GM10248 (cell line): ENCODE measurements at regions of chr4 and their contacts with region 1.

Region 1: DNA sequence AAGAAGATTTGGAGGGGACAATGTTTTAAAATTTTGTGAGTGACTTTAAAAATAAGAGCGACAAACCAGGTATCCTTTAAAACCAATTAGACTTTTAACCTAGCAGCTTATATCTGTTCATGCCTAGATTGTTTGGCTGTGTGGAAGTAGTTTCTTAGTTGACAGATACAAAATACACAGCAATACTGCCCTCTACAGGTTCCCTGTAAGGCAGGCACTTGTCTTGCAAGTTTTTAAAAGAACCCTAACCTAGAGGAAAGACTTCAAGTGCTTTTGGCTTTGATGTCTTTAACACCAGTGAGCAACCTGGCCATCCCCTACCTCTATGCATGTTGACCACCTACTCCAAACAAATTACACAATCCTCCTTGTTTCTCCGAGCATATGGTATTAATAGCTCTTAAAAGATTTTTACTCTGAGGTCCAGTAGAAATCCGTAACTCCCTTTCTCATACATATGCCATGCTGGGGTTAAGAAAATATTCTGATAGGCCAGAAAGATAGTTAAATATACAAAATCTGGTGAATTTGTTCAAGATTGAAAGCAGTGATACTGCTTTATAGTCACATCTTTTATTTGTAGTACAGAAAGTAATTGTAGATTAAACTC is 273.0 kb downstream of the ARHGAP24 start:
- DNase-seq: peak; percentile 55
- CTCF ChIP-seq: peak; percentile 79

Region 2: DNA sequence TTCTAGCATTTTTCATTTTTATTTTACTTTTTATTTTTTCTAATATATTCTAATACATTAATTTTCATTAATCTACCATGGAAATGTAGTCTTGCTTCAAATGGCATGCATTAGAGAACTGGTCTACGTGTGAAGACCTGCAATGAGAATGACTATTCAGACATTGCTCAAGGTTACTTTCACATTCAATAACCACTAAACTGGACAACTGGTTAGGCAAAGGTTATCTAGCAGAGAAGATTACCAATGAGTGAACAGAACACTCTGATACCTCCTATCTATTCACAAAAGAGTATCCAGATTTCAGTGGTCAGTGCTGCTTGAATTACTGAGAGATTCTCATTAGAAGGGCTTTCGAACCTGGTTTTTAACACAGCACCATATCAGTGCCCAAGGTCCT is 331.9 kb before region 1 on chr4:
- CTCF ChIA-PET with region 1: interaction called, 20 read pairs
- POLR2A ChIA-PET with region 1: no interaction called
- DNase-seq: no peak
- CTCF ChIP-seq: no peak

Region 3: DNA sequence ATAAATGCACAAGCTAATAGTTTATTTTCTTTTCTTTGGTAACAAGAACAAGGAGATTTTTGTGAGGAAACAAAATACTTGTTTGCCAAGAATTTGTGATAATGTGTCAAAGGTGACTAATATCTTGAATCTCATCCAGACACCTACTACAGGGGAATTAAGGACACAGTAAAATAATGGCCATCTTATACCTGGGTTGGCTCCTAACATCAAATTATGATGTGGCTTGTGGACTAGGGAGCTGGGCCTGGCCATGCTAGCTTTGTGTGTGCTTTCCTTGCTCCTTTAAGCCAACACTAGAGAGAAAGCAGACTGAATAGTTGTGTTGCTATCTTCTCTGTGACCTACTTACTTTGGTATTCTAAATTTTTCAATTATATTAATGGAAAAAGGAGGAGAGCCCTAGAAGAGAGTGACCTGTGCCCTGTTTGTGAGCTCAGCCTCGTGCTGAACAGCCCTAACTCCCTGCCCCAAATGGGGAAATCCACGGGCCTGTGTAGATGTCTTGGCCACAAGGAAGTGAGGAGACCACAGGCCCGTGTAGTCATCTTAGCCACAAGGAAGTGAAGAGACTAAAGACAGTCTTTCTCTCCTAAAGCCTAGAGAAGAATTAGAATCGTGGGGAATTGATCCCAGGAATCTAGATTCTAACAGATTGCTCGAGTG is 249.8 kb before region 1 on chr4:
- CTCF ChIA-PET with region 1: interaction called, 15 read pairs
- POLR2A ChIA-PET with region 1: no interaction called
- DNase-seq: peak; percentile 49
- CTCF ChIP-seq: no peak

Region 4: GRCh38 chr4:85761803-85762528 is 14.0 kb after region 1 on chr4:
- CTCF ChIA-PET with region 1: interaction called, 23 read pairs
- POLR2A ChIA-PET with region 1: no interaction called
- DNase-seq: no peak
- CTCF ChIP-seq: no peak

Region 5: DNA sequence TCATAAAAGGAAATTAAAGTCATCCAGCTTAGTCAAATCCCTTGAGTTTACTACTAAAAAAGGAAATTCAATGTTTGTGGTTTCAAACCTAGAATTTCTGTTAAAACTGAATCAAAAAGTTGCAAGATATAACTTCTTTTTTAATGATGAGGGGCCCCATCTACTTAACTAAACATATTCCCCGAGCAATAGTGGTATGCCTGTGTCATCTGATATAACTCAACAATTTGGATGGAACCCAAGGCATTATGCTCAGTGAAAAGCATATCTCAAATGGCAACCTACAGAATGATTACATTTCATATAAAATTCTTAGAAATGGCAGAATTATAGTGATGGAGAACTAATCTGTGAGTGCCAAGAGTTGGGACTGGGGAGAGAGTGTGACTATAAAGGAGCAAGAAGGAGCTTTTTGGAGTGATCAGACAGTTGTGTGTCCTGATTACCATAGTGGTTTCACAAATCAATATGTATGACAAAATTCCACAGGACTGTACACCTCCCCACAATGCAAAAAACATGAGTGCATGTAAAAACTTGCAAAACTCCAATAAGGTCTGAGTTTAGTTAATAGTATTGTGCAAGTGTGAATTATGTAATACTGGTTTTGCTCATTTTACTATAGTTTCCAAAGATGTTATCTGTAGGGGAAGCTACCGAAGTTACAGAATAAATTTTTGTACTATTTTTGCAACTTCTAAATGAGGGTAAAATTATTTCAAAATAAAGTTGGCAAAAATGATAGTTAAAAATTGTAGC is 50.2 kb after region 1 on chr4:
- CTCF ChIA-PET with region 1: interaction called, 13 read pairs
- POLR2A ChIA-PET with region 1: no interaction called
- DNase-seq: no peak
- CTCF ChIP-seq: no peak